GM12878 (cell line): ENCODE measurements at regions of chr2 and their contacts with region 1.

Region 1: GRCh38 chr2:67397143-67397986 is at the start of gene ETAA1:
- DNase-seq: peak; percentile 42
- ATAC-seq: peak; percentile 99
- H3K4me3 ChIP-seq: peak within 1 kb of the TSS; percentile 93
- H3K27ac ChIP-seq: peak within 1 kb of the TSS; percentile 70
- H3K4me1 ChIP-seq: no peaks in the 10 kb centered on the region
- H3K27me3 ChIP-seq: no peaks in the 10 kb centered on the region
- CTCF ChIP-seq: no peak
- EP300 ChIP-seq: no peak
- POLR2A ChIP-seq: peak; percentile 94
- RAD21 ChIP-seq: no peak
- polyA plus RNA-seq, gene ETAA1: 4.2 to 5.2 TPM

Region 2: GRCh38 chr2:67268806-67269205 is 128.6 kb before region 1 on chr2:
- CTCF ChIA-PET with region 1: no interaction called
- POLR2A ChIA-PET with region 1: no interaction called
- RAD21 ChIA-PET with region 1: no interaction called
- SMC1A ChIA-PET with region 1: no interaction called
- in situ Hi-C with region 1: no loop called
- intact Hi-C with region 1: no loop called
- DNase-seq: no peak
- ATAC-seq: no peak
- H3K4me3 ChIP-seq: no peak overlapping the region
- H3K27ac ChIP-seq: no peak overlapping the region
- H3K4me1 ChIP-seq: no peaks in the 10 kb centered on the region
- H3K27me3 ChIP-seq: no peaks in the 10 kb centered on the region
- CTCF ChIP-seq: no peak
- EP300 ChIP-seq: no peak
- POLR2A ChIP-seq: no peak
- RAD21 ChIP-seq: no peak

Region 3: GRCh38 chr2:67366832-67367412 is 30.4 kb before region 1 on chr2:
- CTCF ChIA-PET with region 1: no interaction called
- POLR2A ChIA-PET with region 1: no interaction called
- RAD21 ChIA-PET with region 1: no interaction called
- SMC1A ChIA-PET with region 1: no interaction called
- in situ Hi-C with region 1: no loop called
- intact Hi-C with region 1: no loop called
- DNase-seq: no peak
- ATAC-seq: no peak
- H3K4me3 ChIP-seq: no peak overlapping the region
- H3K27ac ChIP-seq: no peak overlapping the region
- H3K4me1 ChIP-seq: no peaks in the 10 kb centered on the region
- H3K27me3 ChIP-seq: no peaks in the 10 kb centered on the region
- CTCF ChIP-seq: no peak
- EP300 ChIP-seq: no peak
- POLR2A ChIP-seq: no peak
- RAD21 ChIP-seq: no peak

Region 4: GRCh38 chr2:67463810-67464209 is 66.4 kb after region 1 on chr2:
- CTCF ChIA-PET with region 1: no interaction called
- POLR2A ChIA-PET with region 1: no interaction called
- RAD21 ChIA-PET with region 1: interaction called, 4 read pairs
- SMC1A ChIA-PET with region 1: interaction called, 5 read pairs
- in situ Hi-C with region 1: no loop called
- intact Hi-C with region 1: loop called (anchors 10 kb)
- DNase-seq: no peak
- ATAC-seq: peak; percentile 81
- H3K4me3 ChIP-seq: no peak overlapping the region
- H3K27ac ChIP-seq: no peak overlapping the region
- H3K4me1 ChIP-seq: no peaks in the 10 kb centered on the region
- H3K27me3 ChIP-seq: no peaks in the 10 kb centered on the region
- CTCF ChIP-seq: no peak
- EP300 ChIP-seq: peak; percentile 90 to 98
- POLR2A ChIP-seq: no peak
- RAD21 ChIP-seq: no peak

Region 5: GRCh38 chr2:68062680-68063387 is 665.5 kb after region 1 on chr2 and contains the start of gene C1D:
- CTCF ChIA-PET with region 1: no interaction called
- POLR2A ChIA-PET with region 1: no interaction called
- RAD21 ChIA-PET with region 1: no interaction called
- SMC1A ChIA-PET with region 1: no interaction called
- in situ Hi-C with region 1: no loop called
- intact Hi-C with region 1: loop called (anchors 10 kb)
- DNase-seq: peak; percentile 82
- ATAC-seq: peak; percentile 89
- H3K4me3 ChIP-seq: peak within 1 kb of the TSS; percentile 94
- H3K27ac ChIP-seq: peak within 1 kb of the TSS; percentile 88
- H3K4me1 ChIP-seq: peaks cover 5% of the 10 kb centered on the region; the same call in 1 of the 2 replicates
- H3K27me3 ChIP-seq: no peaks in the 10 kb centered on the region
- CTCF ChIP-seq: no peak
- EP300 ChIP-seq: no peak
- POLR2A ChIP-seq: peak; percentile 74
- RAD21 ChIP-seq: no peak
- polyA plus RNA-seq, gene C1D: 150 to 152 TPM